ENCODE measurements at regions of chr6 and their contacts with region 1.

Region 1: GRCh38 chr6:53979468-53980067 is 131.7 kb upstream of the MLIP start:
- DNase-seq: peak; percentile 58
- H3K4me3 Mint-ChIP-seq: no peak overlapping the region
- H3K27ac Mint-ChIP-seq: no peak overlapping the region
- H3K4me1 Mint-ChIP-seq: peaks cover 17% of the 10 kb centered on the region
- H3K27me3 Mint-ChIP-seq: no peaks in the 10 kb centered on the region
- CTCF ChIP-seq: peak; percentile 72

Region 2: GRCh38 chr6:54074578-54075195 is 95.1 kb after region 1 on chr6:
- CTCF ChIA-PET with region 1: no interaction called
- POLR2A ChIA-PET with region 1: no interaction called
- intact Hi-C with region 1: no loop called
- DNase-seq: no peak
- H3K4me3 Mint-ChIP-seq: no peak overlapping the region
- H3K27ac Mint-ChIP-seq: no peak overlapping the region
- H3K4me1 Mint-ChIP-seq: peaks cover 6% of the 10 kb centered on the region
- H3K27me3 Mint-ChIP-seq: no peaks in the 10 kb centered on the region
- CTCF ChIP-seq: no peak

Region 3: GRCh38 chr6:54697424-54697823 is 717.9 kb after region 1 on chr6:
- CTCF ChIA-PET with region 1: interaction called, 5 read pairs
- POLR2A ChIA-PET with region 1: no interaction called
- intact Hi-C with region 1: loop called (anchors 5 kb)
- DNase-seq: peak; percentile 32
- H3K4me3 Mint-ChIP-seq: no peak overlapping the region
- H3K27ac Mint-ChIP-seq: peak overlapping the region; percentile 6
- H3K4me1 Mint-ChIP-seq: peaks cover 10% of the 10 kb centered on the region
- H3K27me3 Mint-ChIP-seq: no peaks in the 10 kb centered on the region
- CTCF ChIP-seq: peak; percentile 31

Measured in MCF 10A (cell line).